ENCODE measurements at regions of chr7 and their contacts with region 1.

Region 1: GRCh38 chr7:34321000-34321581 is 336.9 kb upstream of the NPSR1 start:
- DNase-seq: peak; percentile 73
- H3K4me3 ChIP-seq: peak overlapping the region; percentile 34 to 42 (median 35)
- H3K27ac ChIP-seq: peak overlapping the region; percentile 49
- H3K4me1 ChIP-seq: peaks cover 19% of the 10 kb centered on the region
- H3K27me3 ChIP-seq: no peaks in the 10 kb centered on the region
- CTCF ChIP-seq: peak; percentile 86 to 92

Region 2: GRCh38 chr7:34365011-34365410 is 43.9 kb after region 1 on chr7:
- CTCF ChIA-PET with region 1: no interaction called
- dilution Hi-C with region 1: no loop called
- in situ Hi-C with region 1: no loop called
- intact Hi-C with region 1: loop called (anchors 5 kb)
- DNase-seq: peak; percentile 84
- H3K4me3 ChIP-seq: no peak overlapping the region
- H3K27ac ChIP-seq: no peak overlapping the region
- H3K4me1 ChIP-seq: peaks cover 17% of the 10 kb centered on the region
- H3K27me3 ChIP-seq: no peaks in the 10 kb centered on the region
- CTCF ChIP-seq: no peak

Region 3: DNA sequence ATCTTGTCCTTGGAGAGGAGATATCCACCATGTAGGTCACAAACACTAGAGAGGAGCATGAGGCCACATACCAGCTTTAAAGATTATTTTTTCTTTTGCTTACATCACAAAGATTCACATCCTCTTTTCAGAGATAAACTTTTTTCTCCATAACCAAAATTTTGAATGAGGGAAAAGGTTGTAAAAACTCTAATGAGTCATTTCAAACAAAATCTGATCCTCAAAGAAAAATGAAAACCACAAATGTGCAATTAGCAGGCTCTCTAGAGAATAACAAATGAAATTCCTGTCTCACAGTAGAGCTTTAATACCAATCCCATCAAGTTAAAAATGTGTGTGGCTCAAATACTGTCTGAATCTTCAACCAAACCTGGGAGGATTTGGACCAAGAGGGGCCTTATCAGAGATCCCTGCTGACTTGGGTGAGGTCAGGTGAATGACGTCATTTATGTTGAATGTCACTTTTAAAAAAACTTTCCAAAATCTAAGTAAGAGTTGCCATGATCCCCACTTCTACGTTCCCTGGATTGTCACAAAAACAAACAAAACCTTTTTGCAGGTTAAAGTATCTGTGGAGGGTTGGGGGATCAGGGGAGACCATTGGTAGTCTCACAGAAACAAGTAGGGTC is 75.5 kb after region 1 on chr7:
- CTCF ChIA-PET with region 1: interaction called, 6 read pairs
- dilution Hi-C with region 1: no loop called
- in situ Hi-C with region 1: no loop called
- intact Hi-C with region 1: loop called (anchors 1 kb)
- DNase-seq: no peak
- H3K4me3 ChIP-seq: no peak overlapping the region
- H3K27ac ChIP-seq: no peak overlapping the region
- H3K4me1 ChIP-seq: no peaks in the 10 kb centered on the region
- H3K27me3 ChIP-seq: no peaks in the 10 kb centered on the region
- CTCF ChIP-seq: no peak

Region 4: DNA sequence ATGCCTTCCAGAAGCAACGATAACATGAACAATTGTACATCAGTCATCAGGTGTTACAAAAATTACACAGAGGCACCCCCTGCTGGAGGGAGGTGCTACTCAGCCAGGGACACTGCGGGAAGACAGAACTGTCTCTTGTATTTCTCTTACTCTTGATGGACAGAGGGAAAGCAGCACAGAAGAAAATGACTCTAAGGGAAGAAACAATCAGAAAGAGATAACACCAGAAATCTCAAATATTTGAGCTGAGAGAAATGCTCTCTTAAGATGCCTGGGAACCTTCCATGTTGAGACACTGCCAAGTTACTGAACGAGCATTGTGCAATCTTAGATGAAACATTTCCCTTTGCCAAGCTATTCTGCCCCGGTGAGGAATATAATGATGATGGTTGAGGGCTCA is 109.4 kb after region 1 on chr7:
- CTCF ChIA-PET with region 1: interaction called, 6 read pairs
- dilution Hi-C with region 1: no loop called
- in situ Hi-C with region 1: loop called in 1 of 2 experiments (anchors 10 kb)
- intact Hi-C with region 1: loop called (anchors 1 kb)
- DNase-seq: peak; percentile 55
- H3K4me3 ChIP-seq: no peak overlapping the region
- H3K27ac ChIP-seq: no peak overlapping the region
- H3K4me1 ChIP-seq: no peaks in the 10 kb centered on the region
- H3K27me3 ChIP-seq: no peaks in the 10 kb centered on the region
- CTCF ChIP-seq: peak; percentile 85 to 93

Region 5: GRCh38 chr7:34596892-34597291 is 275.8 kb after region 1 on chr7:
- CTCF ChIA-PET with region 1: interaction called, 4 read pairs
- dilution Hi-C with region 1: no loop called
- in situ Hi-C with region 1: no loop called
- intact Hi-C with region 1: loop called (anchors 1 kb)
- DNase-seq: peak; percentile 16
- H3K4me3 ChIP-seq: no peak overlapping the region
- H3K27ac ChIP-seq: no peak overlapping the region
- H3K4me1 ChIP-seq: no peaks in the 10 kb centered on the region
- H3K27me3 ChIP-seq: no peaks in the 10 kb centered on the region
- CTCF ChIP-seq: peak; percentile 72 to 74

Measured in mammary epithelial cell (primary cell).